ENCODE measurements at regions of chr15 and their contacts with region 1.

Region 1: DNA sequence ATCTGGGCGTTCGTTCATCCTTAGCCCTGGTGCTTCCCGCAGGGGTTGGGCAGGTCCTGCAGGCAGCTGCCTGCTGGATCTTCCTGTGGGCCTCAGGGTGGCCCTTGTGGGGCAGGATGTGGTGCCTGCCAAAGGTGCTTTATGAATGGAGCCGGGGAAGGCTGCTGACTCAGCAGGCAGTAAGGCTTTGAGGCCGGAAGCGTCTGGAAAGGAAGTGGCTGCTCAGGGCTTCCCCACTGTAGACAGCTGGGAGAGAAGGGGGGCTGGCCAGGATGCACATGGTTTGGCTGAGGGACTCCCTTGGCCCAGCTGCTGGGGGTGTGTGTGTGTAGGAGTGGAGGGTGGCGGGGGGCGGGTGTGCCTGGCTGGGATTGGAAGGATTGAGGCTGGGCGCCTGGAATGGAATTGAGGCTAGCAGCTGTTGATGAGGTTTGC is 12.9 kb downstream of the CD276 start:
- DNase-seq: peak; percentile 90 to 94 (median 92)
- ATAC-seq: peak; percentile 89 to 97 (median 92)
- H3K4me3 ChIP-seq: no peak overlapping the region
- H3K27ac ChIP-seq: peak overlapping the region in 6 of 12 donors; percentile 5 to 47 (median 25)
- H3K4me1 ChIP-seq: peaks cover 0 to 56% (median 46%) of the 10 kb centered on the region in 12 donors
- H3K27me3 ChIP-seq: peaks cover 0 to 6% (median 0%) of the 10 kb centered on the region in 9 donors
- CTCF ChIP-seq: no peak
- POLR2A ChIP-seq: no peak

Region 2: GRCh38 chr15:73560501-73561117 is 136.4 kb before region 1 on chr15:
- intact Hi-C with region 1: loop called (anchors 2 to 10 kb)
- DNase-seq: no peak
- ATAC-seq: peak in 1 of 4 donors; percentile 49
- H3K4me3 ChIP-seq: no peak overlapping the region
- H3K27ac ChIP-seq: peak overlapping the region in 1 of 12 donors; percentile 2
- H3K4me1 ChIP-seq: peaks cover 0 to 15% (median 3%) of the 10 kb centered on the region in 12 donors
- H3K27me3 ChIP-seq: no peaks in the 10 kb centered on the region
- CTCF ChIP-seq: peak; percentile 16 to 70 (median 54)
- POLR2A ChIP-seq: no peak

Region 3: DNA sequence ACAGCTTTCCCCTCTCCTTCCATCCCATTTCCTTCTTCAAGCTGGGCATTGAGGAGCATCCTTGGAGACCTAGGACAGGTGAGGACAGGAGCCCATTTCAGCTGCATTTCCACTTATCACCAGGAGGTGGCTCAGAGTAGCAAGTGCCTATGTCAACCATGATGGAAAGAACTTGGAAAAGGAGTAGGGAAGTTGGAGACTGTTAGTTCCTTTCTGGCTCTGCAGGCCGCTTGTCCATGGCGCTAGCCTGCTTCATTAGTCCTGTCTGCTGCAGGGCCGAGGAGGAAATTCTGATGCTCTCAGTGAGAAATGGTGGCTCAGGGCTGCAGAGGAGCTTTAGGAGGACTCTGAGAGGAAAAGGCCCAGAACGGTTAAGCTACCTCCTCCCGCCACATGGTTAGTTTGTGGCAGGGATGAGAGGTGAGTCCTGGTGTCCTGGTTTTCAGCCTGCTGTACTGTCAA is 19.9 kb before region 1 on chr15:
- intact Hi-C with region 1: loop called in 9 of 10 experiments (anchors 1 to 2 kb)
- DNase-seq: peak in 4 of 5 donors; percentile 52 to 64 (median 56)
- ATAC-seq: peak; percentile 23 to 82 (median 77)
- H3K4me3 ChIP-seq: no peak overlapping the region
- H3K27ac ChIP-seq: no peak overlapping the region
- H3K4me1 ChIP-seq: peaks cover 0 to 11% (median 0%) of the 10 kb centered on the region in 12 donors
- H3K27me3 ChIP-seq: peaks cover 0 to 14% (median 0%) of the 10 kb centered on the region in 9 donors
- CTCF ChIP-seq: peak; percentile 73 to 88 (median 82)
- POLR2A ChIP-seq: no peak

Region 4: DNA sequence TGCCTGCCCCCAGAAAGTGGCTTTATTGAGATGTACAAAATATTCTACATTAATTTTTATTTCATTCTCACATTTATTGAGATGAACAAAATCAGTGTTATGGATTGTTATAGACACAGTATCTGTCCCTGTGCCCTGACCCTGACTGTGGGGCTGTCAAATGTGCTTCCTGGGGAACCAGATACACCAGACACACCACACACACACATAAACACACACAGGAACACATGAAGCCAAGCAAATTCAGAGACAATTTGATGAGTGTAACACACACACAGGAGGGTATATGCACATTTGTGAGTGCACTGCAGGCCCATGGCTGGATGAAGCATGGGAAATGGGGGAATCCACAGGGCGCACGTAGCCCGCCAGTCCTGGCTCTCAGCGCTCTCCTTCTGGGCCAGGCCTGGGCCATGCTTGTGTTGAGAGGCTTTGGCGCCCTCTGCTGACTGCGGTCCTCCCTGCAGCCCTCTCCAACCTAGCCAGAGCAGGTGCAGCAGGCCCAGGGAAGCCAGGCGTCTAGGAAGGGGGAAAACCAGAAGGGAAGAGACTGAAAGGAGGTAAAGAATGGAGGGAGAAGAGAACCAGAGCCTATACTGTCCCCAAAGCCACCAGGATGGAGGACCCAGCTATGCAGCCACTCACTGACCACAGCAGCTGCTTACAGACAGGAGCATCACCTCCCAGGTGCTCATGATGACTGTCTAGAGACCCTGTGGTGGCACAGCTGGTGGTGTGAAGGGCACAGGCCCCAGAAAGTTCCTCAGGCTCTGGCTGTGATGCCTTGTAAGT is 211.2 kb after region 1 on chr15:
- intact Hi-C with region 1: loop called in 1 of 10 experiments (anchors 5 kb)
- DNase-seq: peak; percentile 76 to 89 (median 87)
- ATAC-seq: peak; percentile 91 to 97 (median 96)
- H3K4me3 ChIP-seq: no peak overlapping the region
- H3K27ac ChIP-seq: no peak overlapping the region
- H3K4me1 ChIP-seq: peaks cover 0 to 17% (median 5%) of the 10 kb centered on the region in 12 donors
- H3K27me3 ChIP-seq: no peaks in the 10 kb centered on the region
- CTCF ChIP-seq: peak; percentile 82 to 95 (median 91)
- POLR2A ChIP-seq: no peak

Measured in heart left ventricle (tissue), 16 donors.